ENCODE measurements at regions of chr2 and their contacts with region 1.

Region 1: DNA sequence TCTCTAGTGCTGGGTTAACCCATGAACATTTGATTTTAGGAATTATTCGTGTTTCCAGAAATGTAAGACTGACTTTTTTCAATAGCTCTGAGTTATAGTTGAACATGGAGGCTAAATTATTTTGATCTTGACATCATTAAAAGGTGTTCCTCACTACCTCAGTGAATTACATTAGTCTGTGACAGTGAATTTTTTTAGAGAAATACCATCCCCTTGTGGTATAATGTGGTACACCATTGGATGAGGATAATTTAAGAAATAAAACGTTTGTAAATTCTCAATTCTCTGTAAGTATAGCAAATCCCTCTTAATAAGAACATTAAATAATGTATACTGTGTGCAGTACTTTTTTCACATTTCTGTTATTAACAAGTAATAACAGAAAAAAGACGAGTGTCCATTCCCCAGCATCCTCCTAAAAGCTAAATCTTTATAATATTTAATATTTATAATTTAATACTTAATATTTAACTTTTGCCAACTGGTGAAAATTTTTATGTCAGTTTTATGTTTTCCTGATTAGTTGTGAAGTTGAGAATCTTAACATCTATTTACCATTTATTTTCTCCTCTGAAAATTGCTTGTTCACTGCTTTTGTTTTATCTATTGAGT is 70.3 kb upstream of the CWC22 start:
- DNase-seq: peak; percentile 46
- H3K4me3 ChIP-seq: no peak overlapping the region
- H3K27ac ChIP-seq: no peak overlapping the region
- H3K4me1 ChIP-seq: no peaks in the 10 kb centered on the region
- H3K27me3 ChIP-seq: no peaks in the 10 kb centered on the region
- CTCF ChIP-seq: peak; percentile 71

Region 2: GRCh38 chr2:179422037-179422643 is 655.3 kb before region 1 on chr2:
- CTCF ChIA-PET with region 1: no interaction called
- POLR2A ChIA-PET with region 1: no interaction called
- intact Hi-C with region 1: loop called (anchors 5 kb)
- DNase-seq: peak; percentile 58
- H3K4me3 ChIP-seq: no peak overlapping the region
- H3K27ac ChIP-seq: no peak overlapping the region
- H3K4me1 ChIP-seq: no peaks in the 10 kb centered on the region
- H3K27me3 ChIP-seq: peaks cover 15% of the 10 kb centered on the region
- CTCF ChIP-seq: peak; percentile 78

Region 3: DNA sequence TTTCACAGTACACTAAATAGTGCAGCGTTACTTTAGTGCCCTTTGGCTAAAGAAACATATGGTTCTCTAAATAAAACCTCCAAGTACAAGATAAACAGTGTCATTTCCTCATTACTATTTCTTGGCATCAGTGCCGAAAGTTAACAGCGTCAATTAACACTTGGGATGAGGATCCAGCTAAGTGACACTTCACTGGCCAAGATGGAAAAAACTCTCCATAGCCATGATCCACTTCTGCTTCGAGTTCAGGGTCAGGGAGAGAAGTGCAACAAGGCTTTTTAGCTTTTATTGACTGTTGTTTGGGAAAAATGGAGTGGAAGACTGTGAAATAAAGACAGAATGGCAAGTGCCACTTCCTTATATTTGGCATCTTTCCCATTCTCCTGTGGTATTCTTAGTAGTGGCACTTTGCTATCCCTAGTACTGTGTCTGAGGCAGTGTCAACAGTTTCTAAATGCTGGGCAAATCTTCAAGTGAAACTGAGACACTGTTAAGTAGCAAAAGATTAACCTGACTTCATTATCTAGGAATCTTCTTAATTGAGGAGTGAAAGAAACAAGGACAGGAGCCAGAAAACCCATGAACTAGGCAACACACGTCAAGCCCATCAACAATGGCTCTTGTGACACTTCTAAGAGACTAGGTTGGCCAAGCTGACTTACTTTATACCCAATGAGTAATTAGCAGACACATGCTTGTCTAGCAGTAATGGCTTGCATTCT is 590.2 kb before region 1 on chr2:
- CTCF ChIA-PET with region 1: no interaction called
- POLR2A ChIA-PET with region 1: no interaction called
- intact Hi-C with region 1: no loop called
- DNase-seq: no peak
- H3K4me3 ChIP-seq: no peak overlapping the region
- H3K27ac ChIP-seq: no peak overlapping the region
- H3K4me1 ChIP-seq: no peaks in the 10 kb centered on the region
- H3K27me3 ChIP-seq: no peaks in the 10 kb centered on the region
- CTCF ChIP-seq: no peak

Region 4: GRCh38 chr2:179773986-179774385 is 303.4 kb before region 1 on chr2:
- CTCF ChIA-PET with region 1: no interaction called
- POLR2A ChIA-PET with region 1: no interaction called
- intact Hi-C with region 1: loop called (anchors 10 kb)
- DNase-seq: no peak
- H3K4me3 ChIP-seq: no peak overlapping the region
- H3K27ac ChIP-seq: no peak overlapping the region
- H3K4me1 ChIP-seq: no peaks in the 10 kb centered on the region
- H3K27me3 ChIP-seq: no peaks in the 10 kb centered on the region
- CTCF ChIP-seq: no peak

Region 5: GRCh38 chr2:179842498-179843153 is 234.8 kb before region 1 on chr2:
- CTCF ChIA-PET with region 1: interaction called, 3 read pairs
- POLR2A ChIA-PET with region 1: no interaction called
- intact Hi-C with region 1: loop called (anchors 1 kb)
- DNase-seq: peak; percentile 62
- H3K4me3 ChIP-seq: no peak overlapping the region
- H3K27ac ChIP-seq: no peak overlapping the region
- H3K4me1 ChIP-seq: no peaks in the 10 kb centered on the region
- H3K27me3 ChIP-seq: peaks cover 4% of the 10 kb centered on the region
- CTCF ChIP-seq: peak; percentile 70

Region 6: DNA sequence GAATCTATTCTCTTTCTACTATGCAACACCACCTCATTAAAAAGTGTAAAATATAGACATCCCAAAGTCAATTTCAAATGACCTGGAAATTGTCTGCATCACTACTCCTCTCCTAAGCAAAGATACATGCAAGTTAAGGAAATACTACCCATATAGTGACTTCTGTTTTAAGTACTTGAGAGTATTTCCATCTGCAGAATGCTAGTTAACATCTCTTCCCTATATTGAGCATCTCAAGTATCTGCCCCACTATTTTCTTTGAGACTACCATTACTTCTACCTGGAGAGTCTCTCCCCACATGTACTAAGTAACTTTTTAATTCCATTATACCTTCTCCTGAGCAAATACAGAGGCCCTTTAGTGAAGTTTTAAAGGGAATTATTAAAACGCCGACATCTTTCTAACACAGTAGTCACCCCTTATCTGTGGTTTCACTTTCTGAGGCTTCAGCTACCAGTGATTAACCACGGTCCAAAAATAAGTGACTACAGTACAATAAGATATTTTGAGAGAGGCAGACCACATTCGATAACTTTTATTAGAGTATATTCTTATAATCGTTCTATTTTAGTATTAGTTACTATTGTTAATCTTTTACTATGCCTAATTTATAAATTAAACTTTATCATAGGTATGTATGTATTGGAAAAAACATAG is 92.1 kb before region 1 on chr2:
- CTCF ChIA-PET with region 1: no interaction called
- POLR2A ChIA-PET with region 1: no interaction called
- intact Hi-C with region 1: loop called (anchors 10 kb)
- DNase-seq: no peak
- H3K4me3 ChIP-seq: no peak overlapping the region
- H3K27ac ChIP-seq: no peak overlapping the region
- H3K4me1 ChIP-seq: peaks cover 4% of the 10 kb centered on the region
- H3K27me3 ChIP-seq: no peaks in the 10 kb centered on the region
- CTCF ChIP-seq: no peak

Region 7: GRCh38 chr2:180599804-180600203 is 522.4 kb after region 1 on chr2:
- CTCF ChIA-PET with region 1: no interaction called
- POLR2A ChIA-PET with region 1: no interaction called
- intact Hi-C with region 1: no loop called
- DNase-seq: no peak
- H3K4me3 ChIP-seq: no peak overlapping the region
- H3K27ac ChIP-seq: no peak overlapping the region
- H3K4me1 ChIP-seq: no peaks in the 10 kb centered on the region
- H3K27me3 ChIP-seq: no peaks in the 10 kb centered on the region
- CTCF ChIP-seq: no peak

Measured in A673 (cell line).